PC-3 (cell line): ENCODE measurements at regions of chr14 and their contacts with region 1.

Region 1: DNA sequence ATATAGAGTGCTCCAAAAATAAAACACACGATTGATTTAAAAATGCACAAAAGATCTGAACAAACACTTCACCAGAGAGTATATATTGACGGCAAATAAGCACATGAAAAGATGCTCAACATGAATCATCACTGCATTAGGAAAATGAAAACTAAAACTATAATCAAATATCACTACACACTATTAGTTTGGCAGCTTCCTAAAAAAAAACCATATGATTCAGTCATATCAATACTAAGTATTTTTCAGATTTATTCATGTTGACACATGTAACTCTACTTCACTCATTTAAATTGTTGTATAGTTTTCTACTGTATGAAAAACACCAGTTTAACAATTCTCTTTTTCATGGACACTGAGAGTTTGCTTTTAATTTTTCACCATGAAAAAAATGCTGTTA is 41.6 kb downstream of the EXOC5 start:
- DNase-seq: no peak
- ATAC-seq: no peak
- H3K4me3 ChIP-seq: no peak overlapping the region
- H3K27ac ChIP-seq: no peak overlapping the region
- H3K4me1 ChIP-seq: no peaks in the 10 kb centered on the region
- H3K27me3 ChIP-seq: no peaks in the 10 kb centered on the region
- CTCF ChIP-seq: no peak

Region 2: DNA sequence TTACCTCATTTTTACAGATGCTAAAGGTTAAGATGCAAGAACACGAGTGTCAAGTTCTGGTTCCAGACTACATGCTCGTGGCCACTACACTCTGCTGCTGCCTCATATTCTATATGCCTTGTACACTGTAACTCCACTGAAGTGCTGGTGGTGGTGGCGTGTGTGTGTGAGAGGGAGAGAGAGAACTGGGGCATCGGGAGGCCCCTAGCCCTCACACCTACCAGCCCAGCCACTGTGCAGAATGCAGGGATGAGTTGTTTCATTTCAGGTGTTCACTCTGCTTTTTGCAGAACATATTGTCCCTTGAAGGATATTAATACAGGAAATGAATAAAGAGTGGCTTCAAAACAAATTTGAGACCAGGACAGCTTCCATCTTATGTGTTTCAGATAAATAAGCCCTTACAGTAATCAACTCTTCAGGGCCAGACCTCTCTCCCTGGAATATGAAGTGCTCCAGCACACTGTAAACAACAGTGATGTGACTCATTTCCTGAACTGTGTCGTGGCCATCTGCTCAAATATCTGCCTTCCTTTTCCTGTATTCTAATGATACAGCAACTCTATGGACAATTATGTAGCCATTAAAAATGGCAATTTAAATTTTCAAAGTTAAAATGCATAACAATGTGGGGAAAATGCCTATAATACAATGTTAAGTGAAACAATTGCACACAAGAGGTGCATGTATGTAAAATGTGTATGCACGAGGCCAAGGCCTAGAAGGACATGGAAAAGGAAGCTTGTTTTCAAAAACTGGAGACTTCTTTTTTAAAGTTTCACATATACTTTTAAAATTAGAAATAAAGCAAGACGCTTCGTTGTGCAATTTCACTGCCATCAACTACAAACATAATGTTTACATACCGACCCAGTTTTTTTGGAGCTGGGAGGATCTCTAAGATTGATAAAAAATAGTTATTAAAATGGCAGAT is 893.5 kb before region 1 on chr14:
- CTCF ChIA-PET with region 1: no interaction called
- POLR2A ChIA-PET with region 1: no interaction called
- intact Hi-C with region 1: no loop called
- DNase-seq: peak; percentile 91
- ATAC-seq: peak; percentile 100
- H3K4me3 ChIP-seq: no peak overlapping the region
- H3K27ac ChIP-seq: peak overlapping the region; percentile 1; the same call in 1 of the 2 replicates
- H3K4me1 ChIP-seq: peaks cover 11% of the 10 kb centered on the region
- H3K27me3 ChIP-seq: peaks cover 10% of the 10 kb centered on the region; the same call in 1 of the 2 replicates
- CTCF ChIP-seq: no peak

Region 3: DNA sequence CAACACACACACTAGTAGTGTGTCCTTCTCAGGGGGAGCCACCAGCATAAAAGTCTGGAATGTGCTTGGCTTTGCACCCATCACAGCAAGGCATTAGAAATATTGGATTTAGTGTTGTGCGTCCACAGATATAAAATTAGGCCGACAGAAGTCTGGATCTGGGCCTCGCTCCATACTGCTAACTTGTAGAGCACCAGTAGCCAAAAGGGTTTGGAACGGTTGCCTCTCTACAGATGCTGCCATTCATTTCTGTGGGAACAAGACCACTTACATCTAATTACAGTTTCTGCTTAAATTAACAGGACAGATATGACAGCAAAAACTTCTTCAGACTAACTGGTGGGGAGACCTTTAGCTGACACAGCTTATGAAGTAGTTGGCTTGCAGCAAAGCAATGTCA is 52.6 kb before region 1 on chr14:
- CTCF ChIA-PET with region 1: no interaction called
- POLR2A ChIA-PET with region 1: interaction called, 37 read pairs
- intact Hi-C with region 1: no loop called
- DNase-seq: no peak
- ATAC-seq: no peak
- H3K4me3 ChIP-seq: no peak overlapping the region
- H3K27ac ChIP-seq: no peak overlapping the region
- H3K4me1 ChIP-seq: no peaks in the 10 kb centered on the region
- H3K27me3 ChIP-seq: peaks cover 99% of the 10 kb centered on the region
- CTCF ChIP-seq: no peak